K562 (cell line): ENCODE measurements at regions of chr21 and their contacts with region 1.

Region 1: DNA sequence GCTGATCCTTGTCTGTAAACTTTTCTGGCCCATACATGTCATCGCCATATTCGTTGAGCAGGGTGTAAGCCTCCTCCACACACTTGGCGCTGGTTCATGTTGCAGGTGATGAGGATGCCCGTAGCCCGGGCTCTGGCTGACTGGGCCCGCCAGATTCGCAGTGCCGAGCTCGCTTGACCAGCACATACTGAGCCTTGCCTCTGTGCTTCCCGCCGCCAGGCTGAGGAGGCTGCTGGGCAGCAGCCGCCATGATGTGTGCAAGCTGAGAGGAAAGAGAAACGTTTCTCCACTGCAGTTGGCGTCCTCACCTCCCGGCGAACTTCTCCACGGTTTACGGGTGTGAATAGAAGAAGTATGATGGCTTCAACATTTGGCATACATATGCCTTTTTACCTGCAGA is 89.2 kb downstream of the LTN1 start:
- DNase-seq: peak in 1 of 4 experiments; percentile 20
- ATAC-seq: peak; percentile 64
- H3K4me3 ChIP-seq: peak overlapping the region; percentile 7; the same call in 1 of the 2 replicates
- H3K27ac ChIP-seq: no peak overlapping the region
- H3K4me1 ChIP-seq: peaks cover 0 to 4% of the 10 kb centered on the region in 2 experiments; a peak in 1 of 5 replicates
- H3K27me3 ChIP-seq: peaks cover 12 to 16% of the 10 kb centered on the region in 2 experiments; a peak in 4 of 5 replicates
- CTCF ChIP-seq: no peak
- EP300 ChIP-seq: no peak
- POLR2A ChIP-seq: no peak
- RAD21 ChIP-seq: no peak

Region 2: GRCh38 chr21:28916150-28916893 is 12.9 kb after region 1 on chr21:
- CTCF ChIA-PET with region 1: no interaction called
- POLR2A ChIA-PET with region 1: interaction called, 20 read pairs
- in situ Hi-C with region 1: no loop called
- intact Hi-C with region 1: no loop called
- DNase-seq: no peak
- ATAC-seq: no peak
- H3K4me3 ChIP-seq: no peak overlapping the region
- H3K27ac ChIP-seq: no peak overlapping the region
- H3K4me1 ChIP-seq: no peaks in the 10 kb centered on the region; a peak in 1 of 5 replicates
- H3K27me3 ChIP-seq: no peaks in the 10 kb centered on the region
- CTCF ChIP-seq: no peak
- EP300 ChIP-seq: no peak
- POLR2A ChIP-seq: no peak
- RAD21 ChIP-seq: no peak

Region 3: DNA sequence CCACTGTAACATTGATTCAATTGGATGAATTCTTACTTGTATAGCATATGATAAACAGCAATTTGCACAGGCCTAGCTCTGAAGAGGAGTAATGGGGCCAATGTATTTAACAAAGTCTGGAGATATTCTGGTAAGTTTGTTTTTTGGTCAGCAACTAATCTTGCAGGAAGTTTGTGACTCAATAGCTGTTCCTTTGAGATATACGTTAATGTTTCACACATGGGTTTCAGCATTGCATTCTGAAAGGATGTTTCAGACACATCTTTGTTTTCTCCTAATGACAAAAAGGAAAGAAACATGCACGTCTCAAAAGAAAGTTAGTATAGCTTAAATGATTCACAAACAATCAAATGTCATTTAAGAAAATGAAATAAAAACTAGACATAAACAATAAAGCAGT is 40.2 kb after region 1 on chr21:
- CTCF ChIA-PET with region 1: no interaction called
- POLR2A ChIA-PET with region 1: no interaction called
- in situ Hi-C with region 1: no loop called
- intact Hi-C with region 1: no loop called
- DNase-seq: no peak
- ATAC-seq: no peak
- H3K4me3 ChIP-seq: no peak overlapping the region
- H3K27ac ChIP-seq: no peak overlapping the region
- H3K4me1 ChIP-seq: no peaks in the 10 kb centered on the region
- H3K27me3 ChIP-seq: no peaks in the 10 kb centered on the region
- CTCF ChIP-seq: no peak
- EP300 ChIP-seq: no peak
- POLR2A ChIP-seq: no peak
- RAD21 ChIP-seq: no peak